HepG2 (cell line): ENCODE measurements at regions of chr22 and their contacts with region 1.

Region 1: DNA sequence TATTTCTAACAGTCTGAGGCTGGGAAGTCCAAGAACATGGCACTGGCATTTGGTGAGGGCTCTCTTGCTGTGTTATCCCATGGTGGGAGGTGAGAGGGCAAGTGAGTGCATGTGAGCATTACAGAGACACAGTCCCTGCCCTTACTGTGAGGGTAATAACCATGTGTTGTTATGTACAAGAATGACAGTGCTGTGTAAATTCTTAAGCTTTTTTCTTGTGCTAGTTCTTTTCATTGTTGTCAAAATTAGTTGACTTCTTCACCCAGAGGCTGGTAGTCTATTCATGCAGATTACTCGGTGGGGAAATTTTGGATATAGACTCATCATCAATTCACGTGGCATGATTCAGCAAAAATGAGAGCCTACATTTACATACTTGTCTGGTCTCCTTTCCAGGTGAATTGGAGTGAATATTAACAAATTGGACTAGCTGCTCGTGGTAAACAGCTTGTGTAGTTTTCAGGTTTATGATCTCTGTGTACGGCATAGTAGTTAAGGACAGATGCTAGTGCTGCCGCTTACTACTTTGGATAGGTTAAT is 49.3 kb downstream of the ATXN10 start:
- DNase-seq: no peak
- ATAC-seq: no peak
- H3K4me3 ChIP-seq: no peak overlapping the region
- H3K27ac ChIP-seq: no peak overlapping the region
- H3K4me1 ChIP-seq: no peaks in the 10 kb centered on the region
- H3K27me3 ChIP-seq: no peaks in the 10 kb centered on the region
- CTCF ChIP-seq: no peak
- EP300 ChIP-seq: no peak
- POLR2A ChIP-seq: no peak
- RAD21 ChIP-seq: no peak

Region 2: DNA sequence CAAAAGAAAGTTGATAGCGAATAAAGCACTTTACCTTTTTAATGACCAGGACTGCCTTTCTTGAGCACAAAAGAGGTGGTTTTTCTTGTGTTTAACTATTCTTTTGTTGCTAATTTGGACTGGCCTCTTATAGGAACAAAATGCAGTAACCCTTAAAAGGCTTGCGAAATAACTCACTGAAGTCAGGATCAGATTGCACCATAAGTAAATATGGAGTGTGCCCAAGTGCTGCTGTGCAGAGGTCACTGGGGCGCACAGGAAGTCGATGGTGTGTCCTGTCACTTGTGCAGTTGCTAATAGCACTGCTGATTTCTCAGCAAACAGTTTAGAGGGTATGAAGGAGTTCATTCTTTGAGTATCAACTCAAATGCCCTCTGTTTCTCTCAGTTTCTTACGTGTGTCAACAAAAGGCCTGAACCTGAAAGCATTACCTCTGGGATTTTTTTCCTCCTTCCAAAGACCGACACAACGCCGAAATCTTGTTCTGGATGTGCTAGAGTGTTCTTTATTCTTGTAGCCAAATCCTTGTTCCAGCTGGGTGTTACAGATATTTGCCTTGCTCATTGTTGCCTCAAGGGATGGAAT is 22.0 kb after region 1 on chr22:
- CTCF ChIA-PET with region 1: no interaction called
- POLR2A ChIA-PET with region 1: no interaction called
- in situ Hi-C with region 1: no loop called
- intact Hi-C with region 1: loop called (anchors 1 kb)
- DNase-seq: peak; percentile 96
- ATAC-seq: peak; percentile 98
- H3K4me3 ChIP-seq: peak overlapping the region in 2 of 3 experiments; percentile 17 to 26; a peak in 1 of 6 replicates
- H3K27ac ChIP-seq: peak overlapping the region; percentile 87
- H3K4me1 ChIP-seq: peaks cover 63% of the 10 kb centered on the region
- H3K27me3 ChIP-seq: no peaks in the 10 kb centered on the region
- CTCF ChIP-seq: peak; percentile 11; the same call in 1 of the 2 replicates
- EP300 ChIP-seq: peak; percentile 98 to 99
- POLR2A ChIP-seq: no peak
- RAD21 ChIP-seq: no peak; the same call in 1 of the 2 replicates

Region 3: GRCh38 chr22:45804986-45805325 is 84.0 kb after region 1 on chr22:
- CTCF ChIA-PET with region 1: no interaction called
- POLR2A ChIA-PET with region 1: no interaction called
- in situ Hi-C with region 1: no loop called
- intact Hi-C with region 1: no loop called
- DNase-seq: peak; percentile 4
- ATAC-seq: no peak
- H3K4me3 ChIP-seq: no peak overlapping the region
- H3K27ac ChIP-seq: no peak overlapping the region
- H3K4me1 ChIP-seq: no peaks in the 10 kb centered on the region
- H3K27me3 ChIP-seq: no peaks in the 10 kb centered on the region
- CTCF ChIP-seq: no peak
- EP300 ChIP-seq: no peak
- POLR2A ChIP-seq: no peak
- RAD21 ChIP-seq: no peak